PC-9 (cell line): ENCODE measurements at regions of chr22 and their contacts with region 1.

Region 1: DNA sequence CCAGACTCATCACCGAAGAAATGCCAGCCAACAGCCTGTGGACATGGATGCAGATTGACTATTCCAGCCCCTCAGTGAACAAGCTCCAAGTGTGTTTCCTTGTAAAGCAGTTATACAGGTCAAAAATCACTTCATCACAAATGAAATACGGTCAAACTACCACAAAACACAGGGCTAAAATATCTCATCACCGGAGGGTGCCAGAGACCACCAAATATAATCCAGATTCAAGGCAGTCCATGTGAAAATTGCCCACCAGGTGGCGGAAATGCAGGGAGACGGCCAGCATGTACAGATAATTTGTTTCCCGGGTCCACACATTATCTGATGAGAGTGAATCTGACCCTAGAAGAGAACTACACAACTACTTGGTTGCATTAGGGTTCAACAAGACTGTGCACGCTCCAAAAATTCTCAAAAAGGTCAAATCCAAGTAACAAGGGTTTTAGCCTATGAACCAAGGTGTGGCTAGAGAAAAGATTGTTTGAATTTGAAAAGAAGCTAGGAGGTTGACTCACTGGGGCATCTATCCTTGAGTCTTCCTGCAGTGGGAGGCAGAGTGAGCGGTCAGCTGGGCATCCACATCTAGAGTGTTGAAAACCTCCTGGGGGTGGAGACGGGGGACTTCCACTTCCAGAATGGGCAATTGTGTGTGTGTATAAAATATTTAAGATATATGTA is 71.7 kb downstream of the IGLL5 start:
- DNase-seq: peak in 1 of 2 experiments; percentile 51
- H3K4me3 ChIP-seq: no peak overlapping the region
- H3K27ac ChIP-seq: no peak overlapping the region
- H3K4me1 ChIP-seq: no peaks in the 10 kb centered on the region
- H3K27me3 ChIP-seq: peaks cover 7% of the 10 kb centered on the region
- CTCF ChIP-seq: peak; percentile 84

Region 2: GRCh38 chr22:22207845-22208564 is 751.3 kb before region 1 on chr22:
- CTCF ChIA-PET with region 1: no interaction called
- POLR2A ChIA-PET with region 1: no interaction called
- intact Hi-C with region 1: loop called (anchors 10 kb)
- DNase-seq: peak; percentile 54 to 65
- H3K4me3 ChIP-seq: no peak overlapping the region
- H3K27ac ChIP-seq: no peak overlapping the region
- H3K4me1 ChIP-seq: peaks cover 11% of the 10 kb centered on the region
- H3K27me3 ChIP-seq: no peaks in the 10 kb centered on the region
- CTCF ChIP-seq: peak; percentile 73

Region 3: GRCh38 chr22:22463855-22464540 is 495.3 kb before region 1 on chr22:
- CTCF ChIA-PET with region 1: no interaction called
- POLR2A ChIA-PET with region 1: no interaction called
- intact Hi-C with region 1: loop called (anchors 1 kb)
- DNase-seq: peak in 1 of 2 experiments; percentile 33
- H3K4me3 ChIP-seq: no peak overlapping the region
- H3K27ac ChIP-seq: no peak overlapping the region
- H3K4me1 ChIP-seq: no peaks in the 10 kb centered on the region
- H3K27me3 ChIP-seq: peaks cover 20% of the 10 kb centered on the region; the same call in 1 of the 2 replicates
- CTCF ChIP-seq: peak; percentile 93

Region 4: DNA sequence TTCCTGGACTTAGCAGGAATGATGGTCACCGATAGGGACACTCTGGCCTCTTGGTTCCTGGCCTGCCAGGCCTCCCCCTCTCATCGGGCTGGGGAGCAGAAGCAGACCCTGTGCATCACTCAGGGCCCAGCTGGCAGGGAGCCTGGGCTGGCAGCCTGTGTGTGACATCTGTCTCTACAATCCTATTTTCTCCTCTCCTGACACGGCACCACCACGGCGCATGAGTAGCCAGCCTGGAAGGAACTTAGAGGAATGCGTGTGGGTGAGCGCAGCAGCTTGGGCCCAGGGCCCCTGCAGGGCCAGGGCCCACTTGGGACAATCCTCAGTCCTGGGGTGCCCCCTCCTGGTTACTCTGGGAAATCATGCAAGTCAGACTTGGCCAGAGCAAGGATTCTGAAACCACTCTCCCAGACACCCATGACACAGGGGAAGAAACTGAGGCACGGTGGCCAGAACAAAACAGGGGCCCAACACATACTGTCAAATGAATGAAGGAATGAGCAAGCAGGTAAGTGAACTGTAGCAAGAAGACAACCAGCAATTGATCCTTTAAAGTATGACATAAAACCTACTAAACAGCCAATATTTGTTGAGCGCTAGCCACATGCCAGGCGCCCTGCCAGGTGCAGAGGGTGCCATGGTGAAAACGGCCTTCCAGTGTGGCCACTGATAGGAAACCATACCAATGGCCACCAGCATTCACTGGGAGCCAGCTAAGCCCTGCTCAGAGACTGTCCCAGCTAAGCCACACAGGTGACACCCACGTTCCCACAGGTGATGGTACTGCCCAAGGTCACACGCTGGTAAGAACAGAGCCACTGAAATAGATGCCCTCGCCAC is 169.2 kb after region 1 on chr22:
- CTCF ChIA-PET with region 1: interaction called, 4 read pairs
- POLR2A ChIA-PET with region 1: no interaction called
- intact Hi-C with region 1: loop called (anchors 1 kb)
- DNase-seq: peak in 1 of 2 experiments; percentile 53
- H3K4me3 ChIP-seq: no peak overlapping the region
- H3K27ac ChIP-seq: no peak overlapping the region
- H3K4me1 ChIP-seq: no peaks in the 10 kb centered on the region
- H3K27me3 ChIP-seq: peaks cover 26% of the 10 kb centered on the region
- CTCF ChIP-seq: peak; percentile 81

Region 5: GRCh38 chr22:23385291-23386244 is 426.3 kb after region 1 on chr22:
- CTCF ChIA-PET with region 1: interaction called, 6 read pairs
- POLR2A ChIA-PET with region 1: no interaction called
- intact Hi-C with region 1: loop called (anchors 1 kb)
- DNase-seq: peak; percentile 41 to 75
- H3K4me3 ChIP-seq: no peak overlapping the region
- H3K27ac ChIP-seq: no peak overlapping the region
- H3K4me1 ChIP-seq: no peaks in the 10 kb centered on the region
- H3K27me3 ChIP-seq: peaks cover 29% of the 10 kb centered on the region
- CTCF ChIP-seq: peak; percentile 98